ENCODE measurements at regions of chr3 and their contacts with region 1.

Region 1: GRCh38 chr3:191383124-191383523 is 52.8 kb upstream of the UTS2B start:
- DNase-seq: no peak
- ATAC-seq: no peak
- H3K4me3 ChIP-seq: no peak overlapping the region
- H3K27ac ChIP-seq: no peak overlapping the region
- H3K4me1 ChIP-seq: peaks cover 18% of the 10 kb centered on the region
- H3K27me3 ChIP-seq: no peaks in the 10 kb centered on the region
- CTCF ChIP-seq: no peak

Region 2: DNA sequence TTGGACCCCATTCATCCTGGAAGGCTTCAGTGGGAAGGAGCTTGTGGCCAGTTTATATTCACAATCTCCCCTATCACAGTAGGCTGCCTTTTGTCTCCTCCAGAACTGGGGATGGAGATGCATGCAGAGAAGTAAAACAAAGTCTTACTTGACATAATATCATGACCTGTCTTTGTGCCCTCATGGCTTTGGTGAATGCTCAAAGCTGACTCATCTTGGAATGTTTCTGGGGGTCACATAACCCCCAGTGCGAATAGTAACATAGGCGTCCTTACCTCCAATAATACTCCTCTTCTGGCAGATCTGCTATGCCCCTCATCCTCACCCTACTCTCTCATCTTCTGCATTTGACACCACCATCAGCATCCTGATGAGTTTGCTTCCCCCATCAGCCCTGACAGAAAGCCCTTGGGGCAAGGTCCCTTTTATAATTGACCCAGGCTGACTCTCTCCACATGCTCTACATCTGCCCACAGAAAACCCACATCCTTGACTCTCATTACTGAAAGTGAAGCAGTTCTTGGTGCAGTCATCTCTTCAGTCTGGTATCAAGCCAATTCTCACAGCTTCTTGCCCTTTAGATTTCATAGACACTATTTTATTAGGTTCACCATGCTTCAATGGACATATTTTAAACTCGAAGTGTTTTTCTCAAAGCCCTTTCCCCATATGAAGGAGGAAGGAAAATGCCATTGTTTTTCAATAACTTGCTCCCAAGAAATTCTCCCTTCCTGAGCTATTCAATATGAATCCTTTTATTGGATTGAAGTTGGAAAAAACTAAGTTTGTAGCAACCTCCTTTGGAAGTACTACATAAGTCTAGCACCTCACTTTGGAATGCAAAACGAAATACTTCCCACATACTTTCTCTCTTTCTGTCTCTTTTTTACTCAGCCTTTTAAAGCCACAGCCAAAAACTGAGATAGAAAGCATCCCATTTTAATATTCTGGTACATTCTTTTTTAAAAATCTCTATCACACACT is 147.5 kb before region 1 on chr3:
- intact Hi-C with region 1: loop called in 1 of 2 experiments (anchors 5 kb)
- DNase-seq: no peak
- ATAC-seq: no peak
- H3K4me3 ChIP-seq: no peak overlapping the region
- H3K27ac ChIP-seq: no peak overlapping the region
- H3K4me1 ChIP-seq: no peaks in the 10 kb centered on the region
- H3K27me3 ChIP-seq: no peaks in the 10 kb centered on the region
- CTCF ChIP-seq: no peak